Activated CD4-positive, alpha-beta T cell treated with anti-CD3 and anti-CD28 coated beads for 36 hours (primary cell): ENCODE measurements at regions of chr19 and their contacts with region 1.

Region 1: DNA sequence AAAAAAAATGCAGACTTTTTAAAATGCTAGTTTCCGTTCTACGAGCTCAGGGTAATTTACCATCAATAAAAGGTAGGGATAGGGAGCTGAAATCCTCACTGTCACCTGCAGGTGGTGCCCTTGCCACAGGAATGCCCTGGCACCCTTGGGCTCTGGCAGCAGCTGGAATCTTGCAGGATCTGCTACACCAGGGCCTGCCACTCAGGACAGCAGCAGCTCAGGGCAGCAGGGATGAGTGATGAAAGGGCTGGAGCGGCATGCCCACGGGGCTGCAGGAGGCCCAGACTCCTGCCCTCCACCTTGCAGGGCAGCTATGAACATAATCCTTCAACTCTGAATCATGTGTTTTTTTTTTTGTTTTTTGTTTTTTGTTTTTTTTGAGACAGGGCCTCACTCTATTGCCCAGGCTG is 54.0 kb downstream of the GNG7 start:
- DNase-seq: peak; percentile 85
- ATAC-seq: peak; percentile 89
- H3K4me3 Mint-ChIP-seq: no peak overlapping the region
- H3K27ac Mint-ChIP-seq: no peak overlapping the region
- H3K4me1 Mint-ChIP-seq: no peaks in the 10 kb centered on the region
- H3K27me3 Mint-ChIP-seq: no peaks in the 10 kb centered on the region

Region 2: DNA sequence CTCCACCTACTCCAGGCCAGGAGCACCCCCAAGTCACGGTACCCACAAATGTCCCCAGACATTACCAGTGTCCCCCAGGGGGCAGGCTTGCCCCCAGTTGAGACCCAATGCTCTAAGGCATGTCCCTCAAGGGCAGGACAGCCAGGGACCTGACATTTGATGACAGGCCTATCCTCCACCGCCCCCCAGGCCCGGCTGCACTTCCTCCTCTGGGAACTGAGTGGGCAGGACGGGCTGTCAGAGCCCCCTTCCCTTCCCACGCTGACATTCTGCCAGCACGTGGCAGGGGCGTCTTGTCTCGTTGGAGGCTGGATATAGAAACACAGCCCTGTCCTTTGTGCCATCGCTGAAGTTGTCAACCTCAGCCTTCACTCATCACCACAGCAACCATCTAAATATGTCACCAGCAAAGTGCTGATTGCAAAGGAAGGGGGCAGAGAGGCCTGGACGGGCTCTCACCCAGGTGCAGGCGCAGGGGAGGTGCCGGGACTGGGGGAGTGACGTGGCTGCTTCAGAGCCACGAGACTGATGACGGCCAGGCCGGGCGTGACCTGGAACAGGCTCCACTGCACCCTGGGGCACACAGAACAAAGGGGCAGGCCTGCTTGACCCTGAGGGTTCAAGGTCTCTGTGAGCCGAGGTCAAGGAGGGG is 15.5 kb after region 1 on chr19:
- CTCF ChIA-PET with region 1: interaction called, 14 read pairs
- POLR2A ChIA-PET with region 1: no interaction called
- intact Hi-C with region 1: no loop called
- DNase-seq: peak; percentile 17
- ATAC-seq: no peak
- H3K4me3 Mint-ChIP-seq: no peak overlapping the region
- H3K27ac Mint-ChIP-seq: no peak overlapping the region
- H3K4me1 Mint-ChIP-seq: peaks cover 2% of the 10 kb centered on the region
- H3K27me3 Mint-ChIP-seq: no peaks in the 10 kb centered on the region

Region 3: GRCh38 chr19:2750808-2751443 is 102.4 kb after region 1 on chr19:
- CTCF ChIA-PET with region 1: interaction called, 39 read pairs
- POLR2A ChIA-PET with region 1: no interaction called
- intact Hi-C with region 1: loop called (anchors 1 kb)
- DNase-seq: no peak
- ATAC-seq: no peak
- H3K4me3 Mint-ChIP-seq: no peak overlapping the region
- H3K27ac Mint-ChIP-seq: no peak overlapping the region
- H3K4me1 Mint-ChIP-seq: peaks cover 9% of the 10 kb centered on the region
- H3K27me3 Mint-ChIP-seq: no peaks in the 10 kb centered on the region

Region 4: GRCh38 chr19:2867025-2867991 is 218.8 kb after region 1 on chr19 and contains the start of gene ZNF556:
- CTCF ChIA-PET with region 1: interaction called, 11 read pairs
- POLR2A ChIA-PET with region 1: no interaction called
- intact Hi-C with region 1: loop called (anchors 1 to 2 kb)
- DNase-seq: peak; percentile 34
- ATAC-seq: peak; percentile 73
- H3K4me3 Mint-ChIP-seq: no peak within 1 kb of the TSS
- H3K27ac Mint-ChIP-seq: no peak within 1 kb of the TSS
- H3K4me1 Mint-ChIP-seq: no peaks in the 10 kb centered on the region
- H3K27me3 Mint-ChIP-seq: peaks cover 5% of the 10 kb centered on the region
- total RNA-seq, gene ZNF556: not detected